WTC11 (cell line): ENCODE measurements at regions of chr20 and their contacts with region 1.

Region 1: GRCh38 chr20:50070991-50071888 is 41.7 kb downstream of the UBE2V1 start:
- DNase-seq: peak; percentile 97
- ATAC-seq: peak; percentile 84
- H3K4me3 Mint-ChIP-seq: peak overlapping the region; percentile 57
- H3K27ac Mint-ChIP-seq: no peak overlapping the region
- H3K4me1 Mint-ChIP-seq: peaks cover 24% of the 10 kb centered on the region
- H3K27me3 Mint-ChIP-seq: no peaks in the 10 kb centered on the region
- CTCF ChIP-seq: peak; percentile 100

Region 2: DNA sequence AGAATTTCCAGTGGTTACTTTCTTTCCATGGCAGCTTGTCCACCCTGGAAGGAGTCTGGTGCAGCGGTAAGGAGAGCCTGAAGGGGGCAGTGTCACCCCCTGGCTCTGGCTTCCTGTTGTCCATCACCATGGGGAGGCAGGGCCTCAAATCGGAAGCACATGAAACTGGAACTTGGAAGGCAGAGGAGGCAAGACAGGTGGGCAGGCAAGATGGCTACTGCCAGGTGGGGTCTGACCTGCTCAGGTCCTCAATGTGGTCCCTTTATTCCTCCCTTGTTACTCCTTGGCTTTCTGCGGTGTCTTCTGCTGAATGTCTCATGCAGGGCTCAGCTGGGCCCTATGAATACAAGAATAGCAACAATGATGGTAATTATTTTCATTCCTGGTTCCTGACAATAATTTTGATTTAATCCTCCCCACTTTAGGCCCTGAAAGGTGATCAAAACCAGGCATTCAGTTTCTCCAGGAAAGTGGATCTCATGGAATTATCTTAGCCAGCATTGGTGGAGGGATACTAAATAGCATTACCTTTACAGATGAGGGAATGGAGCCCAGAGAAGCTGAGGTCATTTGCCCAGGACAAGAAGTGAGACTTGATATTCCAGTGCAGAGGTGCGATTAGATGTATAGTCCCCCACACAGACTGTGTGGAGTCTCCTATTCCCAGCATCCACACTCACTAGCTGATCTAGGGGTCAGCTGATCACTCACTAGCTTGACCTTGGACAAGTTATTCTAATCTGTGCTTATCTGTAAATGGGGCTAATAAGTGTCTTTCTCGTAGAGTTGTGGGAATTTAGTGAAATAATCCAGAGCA is 106.1 kb before region 1 on chr20:
- CTCF ChIA-PET with region 1: interaction called, 45 read pairs
- POLR2A ChIA-PET with region 1: no interaction called
- DNase-seq: peak; percentile 81
- ATAC-seq: peak; percentile 98
- H3K4me3 Mint-ChIP-seq: no peak overlapping the region
- H3K27ac Mint-ChIP-seq: no peak overlapping the region
- H3K4me1 Mint-ChIP-seq: peaks cover 8% of the 10 kb centered on the region
- H3K27me3 Mint-ChIP-seq: no peaks in the 10 kb centered on the region
- CTCF ChIP-seq: peak; percentile 62

Region 3: GRCh38 chr20:50005471-50005981 is 65.7 kb before region 1 on chr20:
- CTCF ChIA-PET with region 1: interaction called, 27 read pairs
- POLR2A ChIA-PET with region 1: no interaction called
- DNase-seq: no peak
- ATAC-seq: no peak
- H3K4me3 Mint-ChIP-seq: no peak overlapping the region
- H3K27ac Mint-ChIP-seq: no peak overlapping the region
- H3K4me1 Mint-ChIP-seq: peaks cover 10% of the 10 kb centered on the region
- H3K27me3 Mint-ChIP-seq: peaks cover 5% of the 10 kb centered on the region
- CTCF ChIP-seq: no peak

Region 4: GRCh38 chr20:50054626-50055511 is 16.4 kb before region 1 on chr20:
- CTCF ChIA-PET with region 1: interaction called, 30 read pairs
- POLR2A ChIA-PET with region 1: interaction called, 9 read pairs
- DNase-seq: no peak
- ATAC-seq: peak; percentile 39
- H3K4me3 Mint-ChIP-seq: no peak overlapping the region
- H3K27ac Mint-ChIP-seq: no peak overlapping the region
- H3K4me1 Mint-ChIP-seq: peaks cover 15% of the 10 kb centered on the region
- H3K27me3 Mint-ChIP-seq: no peaks in the 10 kb centered on the region
- CTCF ChIP-seq: no peak

Region 5: GRCh38 chr20:50115591-50116372 is 44.5 kb after region 1 on chr20:
- CTCF ChIA-PET with region 1: interaction called, 15 read pairs
- POLR2A ChIA-PET with region 1: interaction called, 4 read pairs
- DNase-seq: peak; percentile 91
- ATAC-seq: peak; percentile 83
- H3K4me3 Mint-ChIP-seq: peak overlapping the region; percentile 98
- H3K27ac Mint-ChIP-seq: peak overlapping the region; percentile 91
- H3K4me1 Mint-ChIP-seq: peaks cover 39% of the 10 kb centered on the region
- H3K27me3 Mint-ChIP-seq: 0 out of 2 replicates have a peak, but pooled peaks cover 2% of the 10 kb centered on the region
- CTCF ChIP-seq: no peak

Region 6: DNA sequence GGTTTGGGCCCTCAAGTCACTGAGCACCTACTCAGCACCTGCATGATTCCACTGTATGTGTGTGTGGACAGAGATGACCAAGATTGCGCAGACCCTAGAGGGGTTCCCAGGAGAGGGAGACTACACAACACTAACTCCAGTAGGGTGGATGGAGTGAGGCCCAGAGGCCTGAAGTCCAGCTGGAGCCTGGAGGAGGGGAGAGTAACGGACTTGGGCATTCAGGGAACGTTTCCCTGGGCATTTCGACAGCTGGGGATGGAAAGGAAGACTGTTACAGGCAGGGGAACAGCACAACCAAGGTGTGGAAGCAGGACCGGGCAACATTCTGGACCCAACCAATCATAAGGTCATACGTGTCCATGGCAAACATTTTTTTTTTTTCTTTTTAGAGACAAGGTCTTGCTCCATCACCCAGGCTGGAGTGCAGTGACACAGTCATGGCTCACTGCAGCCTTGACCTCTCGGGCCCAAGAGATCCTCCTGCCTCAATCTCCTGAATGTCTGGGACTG is 108.3 kb after region 1 on chr20:
- CTCF ChIA-PET with region 1: interaction called, 16 read pairs
- POLR2A ChIA-PET with region 1: no interaction called
- DNase-seq: no peak
- ATAC-seq: peak; percentile 53
- H3K4me3 Mint-ChIP-seq: no peak overlapping the region
- H3K27ac Mint-ChIP-seq: peak overlapping the region; percentile 95
- H3K4me1 Mint-ChIP-seq: 0 out of 2 replicates have a peak, but pooled peaks cover 3% of the 10 kb centered on the region
- H3K27me3 Mint-ChIP-seq: peaks cover 4% of the 10 kb centered on the region; the same call in 1 of the 2 replicates
- CTCF ChIP-seq: peak; percentile 34